Activated naive CD4-positive, alpha-beta T cell treated with anti-CD3 and anti-CD28 coated beads, Interleukin-2, amount 10 ng/mL, durations not matched to agents 7 days and 5 days (primary cell): ENCODE measurements at regions of chr13 and their contacts with region 1.

Region 1: GRCh38 chr13:28796938-28797257 is 23.2 kb upstream of the MTUS2 start:
- DNase-seq: no peak
- H3K4me3 Mint-ChIP-seq: no peak overlapping the region
- H3K27ac Mint-ChIP-seq: no peak overlapping the region
- H3K4me1 Mint-ChIP-seq: no peaks in the 10 kb centered on the region
- H3K27me3 Mint-ChIP-seq: peaks cover 20% of the 10 kb centered on the region

Region 2: GRCh38 chr13:28316129-28316528 is 480.8 kb before region 1 on chr13:
- CTCF ChIA-PET with region 1: interaction called, 12 read pairs
- DNase-seq: no peak
- H3K4me3 Mint-ChIP-seq: no peak overlapping the region
- H3K27ac Mint-ChIP-seq: no peak overlapping the region
- H3K4me1 Mint-ChIP-seq: no peaks in the 10 kb centered on the region
- H3K27me3 Mint-ChIP-seq: no peaks in the 10 kb centered on the region

Region 3: DNA sequence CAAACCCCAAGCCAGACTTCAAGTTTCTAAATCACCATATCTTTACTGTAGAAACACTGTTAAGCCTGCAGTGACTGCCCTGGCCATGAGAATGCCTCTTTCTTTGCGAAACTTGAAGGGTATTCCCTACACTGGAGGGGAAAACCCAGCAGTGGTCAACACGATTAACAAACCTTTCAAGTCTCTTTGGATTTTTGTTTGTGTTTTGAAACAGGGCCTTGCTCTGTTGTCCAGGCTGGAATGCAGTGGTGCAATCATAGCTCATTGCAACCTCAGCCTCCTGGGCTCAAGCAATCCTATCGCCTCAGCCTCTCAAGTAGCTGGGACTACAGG is 155.3 kb before region 1 on chr13:
- CTCF ChIA-PET with region 1: no interaction called
- DNase-seq: no peak
- H3K4me3 Mint-ChIP-seq: no peak overlapping the region
- H3K27ac Mint-ChIP-seq: no peak overlapping the region
- H3K4me1 Mint-ChIP-seq: peaks cover 10% of the 10 kb centered on the region
- H3K27me3 Mint-ChIP-seq: peaks cover 11% of the 10 kb centered on the region

Region 4: DNA sequence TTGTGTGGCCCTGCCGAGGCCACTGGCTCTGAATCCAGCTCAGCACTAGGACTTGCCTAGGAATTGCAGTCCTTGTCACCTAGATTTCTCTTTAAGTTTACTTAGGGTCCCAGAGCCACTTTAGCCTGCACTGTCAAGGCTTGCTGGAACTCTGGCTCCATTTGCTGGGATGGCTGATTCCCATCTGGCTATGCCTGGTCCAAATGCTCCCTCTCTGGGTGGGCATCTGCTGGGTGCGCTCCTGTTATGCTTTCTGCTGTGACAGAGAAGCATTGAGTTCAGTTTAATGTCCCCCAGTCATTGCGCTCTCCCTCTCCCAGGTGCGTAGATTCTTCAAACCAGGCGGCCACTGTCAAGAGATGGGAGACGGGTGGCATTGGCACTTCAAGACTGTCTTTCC is 125.4 kb after region 1 on chr13:
- CTCF ChIA-PET with region 1: no interaction called
- DNase-seq: no peak
- H3K4me3 Mint-ChIP-seq: no peak overlapping the region
- H3K27ac Mint-ChIP-seq: no peak overlapping the region
- H3K4me1 Mint-ChIP-seq: no peaks in the 10 kb centered on the region
- H3K27me3 Mint-ChIP-seq: no peaks in the 10 kb centered on the region